ENCODE measurements at regions of chr4 and their contacts with region 1.

Region 1: GRCh38 chr4:106502106-106502699 is 133.6 kb upstream of the GIMD1 start:
- ATAC-seq: peak in 5 of 8 experiments; percentile 39 to 78 (median 48)
- H3K4me3 ChIP-seq: no peak overlapping the region
- H3K27ac ChIP-seq: no peak overlapping the region
- H3K4me1 ChIP-seq: no peaks in the 10 kb centered on the region

Region 2: DNA sequence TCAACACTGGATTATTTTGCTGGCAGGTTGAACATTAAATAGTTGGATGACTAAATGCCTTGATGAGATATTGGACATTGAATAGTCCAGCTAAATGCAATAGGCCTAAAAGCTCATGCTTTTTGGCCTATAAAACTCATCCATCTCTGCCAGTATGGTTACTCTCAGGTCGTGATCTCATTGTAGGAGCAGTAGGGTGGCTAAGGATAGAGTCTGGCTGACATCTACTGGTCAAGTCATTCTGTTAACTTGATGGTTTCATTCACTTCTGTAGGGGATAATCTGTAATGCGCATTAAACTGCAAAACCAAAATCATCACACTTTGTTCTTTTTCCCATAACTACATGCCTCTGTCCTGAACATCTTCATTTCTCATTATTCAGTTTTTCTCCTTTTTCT is 306.9 kb after region 1 on chr4:
- in situ Hi-C with region 1: loop called in 1 of 9 experiments (anchors 25 kb)
- ATAC-seq: peak in 3 of 8 experiments; percentile 94 to 100 (median 100)
- H3K4me3 ChIP-seq: no peak overlapping the region
- H3K27ac ChIP-seq: no peak overlapping the region
- H3K4me1 ChIP-seq: no peaks in the 10 kb centered on the region

Measured in motor neuron (in vitro differentiated cells).